ENCODE measurements at regions of chr3 and their contacts with region 1.

Region 1: DNA sequence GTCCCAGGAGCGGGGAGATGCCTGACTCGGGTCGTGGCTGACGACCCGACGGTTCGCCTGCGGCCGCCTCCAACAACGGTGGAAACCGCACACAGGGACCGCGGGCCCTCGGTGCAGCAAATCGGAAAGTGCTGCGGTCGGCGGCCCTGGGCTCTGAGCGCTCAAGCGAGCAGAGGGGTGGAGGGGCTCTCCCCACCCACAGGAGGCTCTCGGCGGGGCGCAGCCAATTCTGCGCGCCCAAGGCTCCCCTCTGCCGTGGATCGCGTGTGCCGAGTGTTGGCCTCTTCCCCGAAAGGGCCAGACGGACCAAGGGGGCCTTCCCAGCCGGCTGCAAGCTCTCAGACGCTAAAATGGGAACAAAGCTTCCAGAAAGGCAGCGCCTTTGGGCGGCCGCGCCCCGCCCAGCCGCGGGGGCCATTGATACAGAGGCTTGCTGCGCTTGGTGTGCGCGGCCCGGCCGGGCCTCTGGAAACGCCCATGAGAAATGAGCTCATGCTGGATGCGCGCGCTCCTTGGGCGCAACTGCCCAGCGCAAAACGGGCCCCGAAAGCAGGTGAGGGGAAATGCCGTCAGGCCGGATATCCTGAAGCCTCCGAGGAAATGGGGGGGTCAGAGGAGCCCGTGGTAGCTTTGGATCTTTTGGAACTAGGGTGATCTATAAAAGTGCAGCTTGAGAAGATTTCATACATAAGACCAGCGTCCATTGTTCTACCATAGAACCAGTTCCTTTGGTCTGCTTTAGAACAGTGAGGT is 1.2 kb upstream of the GSK3B start:
- DNase-seq: peak; percentile 73

Region 2: GRCh38 chr3:120052225-120052624 is 43.2 kb before region 1 on chr3:
- CTCF ChIA-PET with region 1: no interaction called
- POLR2A ChIA-PET with region 1: interaction called, 11 read pairs
- DNase-seq: no peak

Region 3: GRCh38 chr3:120081719-120082118 is 13.7 kb before region 1 on chr3:
- CTCF ChIA-PET with region 1: no interaction called
- POLR2A ChIA-PET with region 1: interaction called, 30 read pairs
- DNase-seq: no peak

Region 4: DNA sequence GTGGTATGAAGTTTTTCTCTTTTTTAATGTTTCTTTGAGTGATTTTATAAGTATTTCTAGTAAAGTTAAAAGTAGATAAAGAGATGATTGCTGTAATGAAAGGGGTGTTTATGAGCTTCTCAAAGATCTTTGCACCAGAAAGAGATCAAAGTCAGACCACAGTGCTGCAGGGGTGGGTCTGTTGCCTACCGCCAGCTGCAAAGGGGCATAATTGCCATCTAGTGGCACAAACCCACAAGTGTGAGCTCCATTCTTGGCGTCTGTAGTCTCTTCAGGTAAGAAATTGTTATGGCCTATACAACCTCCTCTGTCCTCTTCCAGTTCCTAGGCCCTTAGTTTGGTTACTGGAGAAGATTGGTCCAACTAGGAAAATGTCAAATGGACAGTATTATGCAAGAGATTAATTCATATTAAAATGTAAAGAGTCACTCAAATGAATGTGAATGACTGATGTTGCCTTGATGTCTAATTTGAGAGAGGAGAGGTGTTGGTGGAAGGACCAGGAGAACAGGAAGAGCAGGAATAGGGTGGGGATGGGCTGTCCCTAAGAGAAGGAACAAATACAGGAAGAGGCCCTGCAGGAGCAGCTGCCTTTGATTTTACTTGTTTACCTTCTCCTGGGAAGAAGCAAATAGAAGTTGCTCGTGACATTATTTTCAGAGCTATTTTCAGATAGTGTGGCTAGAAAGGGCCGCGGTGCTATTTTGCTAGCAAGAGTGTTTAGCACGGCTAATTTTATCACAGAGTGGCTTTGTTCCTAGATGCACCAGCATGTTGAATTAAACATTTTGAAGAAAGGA is 51.9 kb after region 1 on chr3:
- CTCF ChIA-PET with region 1: no interaction called
- POLR2A ChIA-PET with region 1: interaction called, 12 read pairs
- DNase-seq: no peak

Region 5: GRCh38 chr3:120172070-120172469 is 76.7 kb after region 1 on chr3:
- CTCF ChIA-PET with region 1: no interaction called
- POLR2A ChIA-PET with region 1: interaction called, 45 read pairs
- DNase-seq: no peak

Region 6: DNA sequence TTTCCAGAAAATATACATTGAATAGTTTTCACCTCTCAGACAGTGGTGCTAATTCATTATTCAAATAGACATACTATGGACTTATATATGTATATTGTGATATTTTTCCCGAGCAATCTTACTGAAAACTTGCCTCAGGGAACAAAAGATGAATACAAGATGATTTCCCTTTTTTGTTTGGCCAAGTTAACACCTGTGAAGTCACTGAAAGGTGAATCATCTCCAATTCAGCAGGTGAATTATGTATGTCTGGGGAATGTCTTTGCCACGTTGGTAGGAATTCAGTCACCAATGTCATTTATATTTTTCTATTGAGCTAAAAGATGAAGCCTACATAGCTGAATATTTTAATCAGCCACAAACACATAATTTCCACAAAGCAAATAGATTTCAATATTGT is 101.4 kb after region 1 on chr3:
- CTCF ChIA-PET with region 1: no interaction called
- POLR2A ChIA-PET with region 1: interaction called, 10 read pairs
- DNase-seq: no peak

Measured in HEK293T (cell line).